Activated CD4-positive, alpha-beta memory T cell treated with anti-CD3 and anti-CD28 coated beads, Interleukin-2, amount 10 ng/mL, durations not matched to agents 7 days and 5 days (primary cell): ENCODE measurements at regions of chr14 and their contacts with region 1.

Region 1: DNA sequence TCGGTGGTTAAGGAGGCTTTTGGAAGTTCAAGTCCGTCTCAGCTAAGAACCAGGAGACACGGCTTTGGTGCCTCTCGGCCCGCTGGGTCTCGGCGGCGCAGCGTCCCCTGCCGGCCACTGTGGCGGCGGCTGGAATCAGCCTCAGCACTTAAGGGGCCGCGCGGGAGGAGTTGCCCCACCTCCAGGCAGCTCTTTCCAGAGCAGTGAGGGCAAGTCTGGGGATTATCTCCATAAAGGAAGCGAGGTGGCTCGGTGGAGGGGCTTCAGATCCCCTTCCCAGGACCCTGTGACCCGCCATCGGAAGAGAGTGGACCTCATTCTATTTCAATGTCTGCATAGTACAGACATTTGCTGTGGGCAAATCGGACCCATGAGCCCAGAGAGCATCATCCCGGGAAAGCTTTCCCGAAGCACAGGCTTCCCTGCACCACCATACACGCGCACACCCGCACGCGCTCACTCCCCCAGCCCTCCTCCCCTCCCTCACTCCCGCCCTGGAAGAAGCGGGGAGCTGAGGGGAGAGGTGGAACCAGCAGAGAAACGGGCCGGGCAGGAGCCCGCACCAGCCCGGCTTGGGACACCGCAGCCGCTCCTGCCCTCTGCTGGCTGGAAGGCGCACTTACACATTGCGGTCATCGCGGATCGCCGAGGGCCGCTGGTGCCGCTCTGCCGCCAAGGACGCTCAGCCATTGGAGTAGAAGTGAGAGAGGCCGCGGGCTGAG is 15.9 kb downstream of the RNASE2 start:
- DNase-seq: peak; percentile 82
- H3K4me3 Mint-ChIP-seq: peak overlapping the region; percentile 81
- H3K27ac Mint-ChIP-seq: no peak overlapping the region
- H3K4me1 Mint-ChIP-seq: peaks cover 9% of the 10 kb centered on the region
- H3K27me3 Mint-ChIP-seq: peaks cover 41% of the 10 kb centered on the region

Region 2: DNA sequence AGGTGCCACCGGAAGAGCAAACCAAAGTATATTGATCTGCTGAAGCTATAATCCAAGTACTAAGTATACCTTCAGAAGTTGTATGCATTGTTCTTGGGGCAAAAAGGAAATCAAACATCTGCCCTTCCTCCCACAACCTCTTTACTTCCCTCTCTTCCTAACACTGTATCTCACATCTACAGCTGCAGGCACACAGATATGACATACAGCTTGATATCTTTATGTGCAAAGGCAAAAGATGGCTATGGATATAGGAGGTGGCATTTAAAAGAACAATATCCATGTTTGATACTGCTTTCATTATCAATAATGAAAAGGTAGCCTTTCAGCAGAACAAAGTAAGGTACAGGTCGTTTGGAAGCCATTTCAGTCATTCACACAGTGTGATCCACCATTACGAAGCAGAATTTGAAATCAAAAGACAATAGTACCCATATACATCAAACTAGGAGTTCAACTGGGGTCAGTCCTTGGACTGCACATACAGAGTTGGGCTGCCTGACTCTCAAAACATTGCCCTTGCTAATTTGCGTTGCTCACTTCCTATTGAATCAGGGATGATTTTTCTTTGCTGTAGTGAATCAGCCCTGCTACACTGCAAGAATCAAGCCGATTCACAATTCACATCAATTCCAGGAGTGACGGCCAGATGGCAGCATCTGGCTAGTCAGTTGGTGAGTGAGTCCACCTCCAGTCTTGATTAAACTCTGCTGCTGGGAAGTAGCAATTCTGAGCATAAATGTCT is 273.7 kb before region 1 on chr14:
- CTCF ChIA-PET with region 1: interaction called, 24 read pairs
- POLR2A ChIA-PET with region 1: no interaction called
- DNase-seq: peak; percentile 74
- H3K4me3 Mint-ChIP-seq: no peak overlapping the region
- H3K27ac Mint-ChIP-seq: no peak overlapping the region
- H3K4me1 Mint-ChIP-seq: peaks cover 18% of the 10 kb centered on the region
- H3K27me3 Mint-ChIP-seq: peaks cover 1% of the 10 kb centered on the region

Region 3: GRCh38 chr14:20873370-20874177 is 97.6 kb before region 1 on chr14:
- CTCF ChIA-PET with region 1: interaction called, 26 read pairs
- POLR2A ChIA-PET with region 1: no interaction called
- DNase-seq: peak; percentile 82
- H3K4me3 Mint-ChIP-seq: no peak overlapping the region
- H3K27ac Mint-ChIP-seq: no peak overlapping the region
- H3K4me1 Mint-ChIP-seq: peaks cover 19% of the 10 kb centered on the region
- H3K27me3 Mint-ChIP-seq: peaks cover 25% of the 10 kb centered on the region

Region 4: GRCh38 chr14:20982646-20983369 is 11.7 kb after region 1 on chr14:
- CTCF ChIA-PET with region 1: interaction called, 42 read pairs
- POLR2A ChIA-PET with region 1: no interaction called
- DNase-seq: no peak
- H3K4me3 Mint-ChIP-seq: no peak overlapping the region
- H3K27ac Mint-ChIP-seq: no peak overlapping the region
- H3K4me1 Mint-ChIP-seq: peaks cover 9% of the 10 kb centered on the region
- H3K27me3 Mint-ChIP-seq: peaks cover 13% of the 10 kb centered on the region

Region 5: GRCh38 chr14:20998664-20999366 is 27.7 kb after region 1 on chr14 and contains the start of gene SLC39A2:
- CTCF ChIA-PET with region 1: interaction called, 12 read pairs
- POLR2A ChIA-PET with region 1: no interaction called
- DNase-seq: no peak
- H3K4me3 Mint-ChIP-seq: no peak within 1 kb of the TSS
- H3K27ac Mint-ChIP-seq: no peak within 1 kb of the TSS
- H3K4me1 Mint-ChIP-seq: peaks cover 14% of the 10 kb centered on the region
- H3K27me3 Mint-ChIP-seq: no peaks in the 10 kb centered on the region
- total RNA-seq, gene SLC39A2: not detected

Region 6: GRCh38 chr14:21308479-21309237 is 337.5 kb after region 1 on chr14:
- CTCF ChIA-PET with region 1: no interaction called
- POLR2A ChIA-PET with region 1: no interaction called
- DNase-seq: peak; percentile 75
- H3K4me3 Mint-ChIP-seq: peak overlapping the region; percentile 38
- H3K27ac Mint-ChIP-seq: peak overlapping the region; percentile 40
- H3K4me1 Mint-ChIP-seq: peaks cover 19% of the 10 kb centered on the region
- H3K27me3 Mint-ChIP-seq: peaks cover 2% of the 10 kb centered on the region